ENCODE measurements at regions of chr19 and their contacts with region 1.

Region 1: GRCh38 chr19:29665215-29665825 is at the start of gene PLEKHF1:
- DNase-seq: peak; percentile 78
- H3K4me3 ChIP-seq: peak within 1 kb of the TSS; percentile 76 to 79 (median 79)
- H3K27ac ChIP-seq: peak within 1 kb of the TSS; percentile 72
- H3K4me1 ChIP-seq: peaks cover 58% of the 10 kb centered on the region
- H3K27me3 ChIP-seq: no peaks in the 10 kb centered on the region
- CTCF ChIP-seq: no peak
- total RNA-seq, gene PLEKHF1: 20.6 to 31.2 TPM

Region 2: GRCh38 chr19:29372921-29373797 is 292.2 kb before region 1 on chr19:
- CTCF ChIA-PET with region 1: no interaction called
- dilution Hi-C with region 1: no loop called
- in situ Hi-C with region 1: no loop called
- intact Hi-C with region 1: no loop called
- DNase-seq: no peak
- H3K4me3 ChIP-seq: no peak overlapping the region
- H3K27ac ChIP-seq: no peak overlapping the region
- H3K4me1 ChIP-seq: no peaks in the 10 kb centered on the region
- H3K27me3 ChIP-seq: no peaks in the 10 kb centered on the region
- CTCF ChIP-seq: no peak

Region 3: GRCh38 chr19:29622138-29623070 is 42.9 kb before region 1 on chr19:
- CTCF ChIA-PET with region 1: no interaction called
- dilution Hi-C with region 1: no loop called
- in situ Hi-C with region 1: loop called in 1 of 2 experiments (anchors 5 kb)
- intact Hi-C with region 1: loop called (anchors 5 kb)
- DNase-seq: no peak
- H3K4me3 ChIP-seq: no peak overlapping the region
- H3K27ac ChIP-seq: no peak overlapping the region
- H3K4me1 ChIP-seq: no peaks in the 10 kb centered on the region
- H3K27me3 ChIP-seq: no peaks in the 10 kb centered on the region
- CTCF ChIP-seq: no peak

Region 4: GRCh38 chr19:29645911-29646310 is 19.4 kb before region 1 on chr19:
- CTCF ChIA-PET with region 1: interaction called, 5 read pairs
- dilution Hi-C with region 1: no loop called
- in situ Hi-C with region 1: no loop called
- intact Hi-C with region 1: loop called (anchors 1 kb)
- DNase-seq: peak; percentile 72
- H3K4me3 ChIP-seq: peak overlapping the region in 1 of 3 experiments; percentile 14
- H3K27ac ChIP-seq: no peak overlapping the region
- H3K4me1 ChIP-seq: peaks cover 21% of the 10 kb centered on the region
- H3K27me3 ChIP-seq: no peaks in the 10 kb centered on the region
- CTCF ChIP-seq: no peak

Region 5: GRCh38 chr19:29687244-29687896 is 22.1 kb after region 1 on chr19:
- CTCF ChIA-PET with region 1: interaction called, 3 read pairs
- dilution Hi-C with region 1: no loop called
- in situ Hi-C with region 1: no loop called
- intact Hi-C with region 1: loop called (anchors 1 kb)
- DNase-seq: peak; percentile 78
- H3K4me3 ChIP-seq: no peak overlapping the region
- H3K27ac ChIP-seq: no peak overlapping the region
- H3K4me1 ChIP-seq: peaks cover 22% of the 10 kb centered on the region
- H3K27me3 ChIP-seq: no peaks in the 10 kb centered on the region
- CTCF ChIP-seq: no peak